ENCODE measurements at regions of chr11 and their contacts with region 1.

Region 1: DNA sequence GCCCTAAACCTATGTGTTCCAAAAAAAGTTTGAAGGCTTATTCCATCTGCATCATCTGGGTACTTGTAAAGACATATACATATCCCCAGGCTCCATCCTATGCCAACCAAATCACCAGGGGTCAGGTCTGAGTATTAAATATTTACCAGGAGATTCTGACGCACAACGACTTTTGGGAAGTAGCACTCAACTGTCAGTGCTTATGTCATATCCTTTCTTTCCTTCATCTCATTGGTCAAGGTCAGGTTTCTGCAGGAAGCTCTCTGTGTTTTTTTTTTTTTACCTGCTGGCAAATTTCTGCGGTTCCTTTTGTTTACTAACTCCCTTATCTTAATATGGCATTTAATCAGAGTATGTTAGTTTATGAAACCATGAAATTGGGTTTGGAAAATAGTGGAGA is 22.5 kb upstream of the CYP2R1 start:
- DNase-seq: no peak
- ATAC-seq: no peak
- H3K4me3 ChIP-seq: no peak overlapping the region
- H3K4me3 Mint-ChIP-seq: no peak overlapping the region
- H3K27ac ChIP-seq: no peak overlapping the region
- H3K27ac Mint-ChIP-seq: no peak overlapping the region
- H3K4me1 ChIP-seq: no peaks in the 10 kb centered on the region
- H3K4me1 Mint-ChIP-seq: no peaks in the 10 kb centered on the region
- H3K27me3 ChIP-seq: no peaks in the 10 kb centered on the region
- H3K27me3 Mint-ChIP-seq: peaks cover 5% of the 10 kb centered on the region
- CTCF ChIP-seq: no peak

Region 2: GRCh38 chr11:14861680-14862079 is 52.9 kb before region 1 on chr11:
- CTCF ChIA-PET with region 1: no interaction called
- POLR2A ChIA-PET with region 1: no interaction called
- intact Hi-C with region 1: no loop called
- DNase-seq: no peak
- ATAC-seq: no peak
- H3K4me3 ChIP-seq: no peak overlapping the region
- H3K4me3 Mint-ChIP-seq: no peak overlapping the region
- H3K27ac ChIP-seq: no peak overlapping the region
- H3K27ac Mint-ChIP-seq: peak overlapping the region; percentile 20
- H3K4me1 ChIP-seq: no peaks in the 10 kb centered on the region
- H3K4me1 Mint-ChIP-seq: peaks cover 7% of the 10 kb centered on the region
- H3K27me3 ChIP-seq: no peaks in the 10 kb centered on the region
- H3K27me3 Mint-ChIP-seq: no peaks in the 10 kb centered on the region
- CTCF ChIP-seq: no peak

Region 3: GRCh38 chr11:14927146-14927545 is 12.6 kb after region 1 on chr11:
- CTCF ChIA-PET with region 1: no interaction called
- POLR2A ChIA-PET with region 1: no interaction called
- intact Hi-C with region 1: no loop called
- DNase-seq: no peak
- ATAC-seq: no peak
- H3K4me3 ChIP-seq: no peak overlapping the region
- H3K4me3 Mint-ChIP-seq: no peak overlapping the region
- H3K27ac ChIP-seq: no peak overlapping the region
- H3K27ac Mint-ChIP-seq: no peak overlapping the region
- H3K4me1 ChIP-seq: no peaks in the 10 kb centered on the region
- H3K4me1 Mint-ChIP-seq: no peaks in the 10 kb centered on the region
- H3K27me3 ChIP-seq: no peaks in the 10 kb centered on the region
- H3K27me3 Mint-ChIP-seq: no peaks in the 10 kb centered on the region
- CTCF ChIP-seq: no peak

Region 4: DNA sequence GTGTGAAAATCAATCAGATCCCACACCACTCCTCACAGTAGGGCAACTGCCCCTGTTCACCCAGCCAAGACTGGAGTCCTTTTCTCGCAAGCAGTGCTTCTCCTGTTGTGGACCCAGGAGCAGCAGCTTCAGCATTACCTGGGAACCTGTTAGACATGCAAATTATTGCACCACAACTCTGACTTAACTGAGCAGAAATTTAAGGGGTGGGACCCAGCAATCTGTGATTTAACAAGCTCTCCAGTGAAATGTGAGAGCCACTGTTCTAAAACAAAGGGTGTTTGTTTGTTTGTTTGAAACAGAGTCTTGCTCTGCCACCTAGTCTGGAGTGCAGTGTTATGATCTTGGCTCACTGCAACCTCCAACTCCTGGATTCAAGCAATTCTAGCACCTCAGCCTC is 850.4 kb after region 1 on chr11:
- CTCF ChIA-PET with region 1: no interaction called
- POLR2A ChIA-PET with region 1: no interaction called
- intact Hi-C with region 1: no loop called
- DNase-seq: no peak
- ATAC-seq: no peak
- H3K4me3 ChIP-seq: no peak overlapping the region
- H3K4me3 Mint-ChIP-seq: no peak overlapping the region
- H3K27ac ChIP-seq: no peak overlapping the region
- H3K27ac Mint-ChIP-seq: no peak overlapping the region
- H3K4me1 ChIP-seq: no peaks in the 10 kb centered on the region
- H3K4me1 Mint-ChIP-seq: no peaks in the 10 kb centered on the region
- H3K27me3 ChIP-seq: no peaks in the 10 kb centered on the region
- H3K27me3 Mint-ChIP-seq: peaks cover 6% of the 10 kb centered on the region
- CTCF ChIP-seq: no peak

Region 5: DNA sequence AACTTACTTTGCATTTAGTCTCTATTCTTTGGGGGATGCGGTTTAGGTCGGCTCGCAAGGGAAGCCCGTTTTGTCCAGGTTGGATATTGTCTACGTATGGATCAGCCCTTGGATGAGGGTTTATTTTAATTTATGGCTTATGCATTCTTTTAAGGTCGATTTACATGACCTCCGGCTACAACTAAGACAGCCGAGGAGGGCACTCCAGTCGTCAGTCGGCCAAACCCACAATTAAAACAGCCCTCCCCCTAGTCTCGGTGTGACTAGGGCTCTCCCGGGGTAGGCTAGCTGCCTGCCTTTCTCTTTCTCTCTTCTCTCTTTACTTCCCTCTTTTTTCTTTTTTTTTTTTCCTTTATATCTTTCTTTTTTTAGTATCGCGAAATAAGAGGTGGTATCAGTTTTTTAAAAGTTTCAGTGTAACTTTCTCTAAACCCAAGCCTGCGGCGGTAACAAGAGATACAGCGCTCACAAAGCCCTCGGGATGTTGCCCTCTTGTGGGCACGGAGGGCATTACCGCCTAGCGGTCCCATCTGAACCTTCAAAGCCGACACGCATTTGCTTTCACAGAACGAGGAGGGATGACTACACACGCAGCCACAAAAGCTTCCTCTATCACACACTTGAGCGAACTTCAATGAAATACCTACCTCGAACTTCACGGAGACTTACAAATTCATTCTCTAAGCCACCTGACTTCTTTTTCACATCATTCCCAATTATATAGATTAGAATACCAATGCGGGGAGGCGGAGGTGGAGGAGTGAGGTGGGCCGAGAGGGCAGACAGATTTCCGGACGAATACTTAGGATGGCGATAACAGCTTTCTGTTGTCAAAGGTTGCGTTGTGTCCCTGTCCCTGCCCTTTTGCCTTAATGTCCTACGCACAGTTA is 1691.6 kb after region 1 on chr11:
- CTCF ChIA-PET with region 1: no interaction called
- POLR2A ChIA-PET with region 1: no interaction called
- intact Hi-C with region 1: loop called in 1 of 2 experiments (anchors 10 kb)
- DNase-seq: peak; percentile 63 to 88 (median 77)
- ATAC-seq: peak; percentile 90
- H3K4me3 ChIP-seq: peak overlapping the region; percentile 39
- H3K4me3 Mint-ChIP-seq: peak overlapping the region; percentile 80
- H3K27ac ChIP-seq: no peak overlapping the region
- H3K27ac Mint-ChIP-seq: peak overlapping the region; percentile 0
- H3K4me1 ChIP-seq: peaks cover 41% of the 10 kb centered on the region
- H3K4me1 Mint-ChIP-seq: peaks cover 9% of the 10 kb centered on the region
- H3K27me3 ChIP-seq: peaks cover 79 to 97% of the 10 kb centered on the region in 2 experiments
- H3K27me3 Mint-ChIP-seq: peaks cover 53% of the 10 kb centered on the region
- CTCF ChIP-seq: peak; percentile 92

Measured in CD4-positive, alpha-beta T cell (primary cell).